RWPE1 (cell line): ENCODE measurements at regions of chr9 and their contacts with region 1.

Region 1: DNA sequence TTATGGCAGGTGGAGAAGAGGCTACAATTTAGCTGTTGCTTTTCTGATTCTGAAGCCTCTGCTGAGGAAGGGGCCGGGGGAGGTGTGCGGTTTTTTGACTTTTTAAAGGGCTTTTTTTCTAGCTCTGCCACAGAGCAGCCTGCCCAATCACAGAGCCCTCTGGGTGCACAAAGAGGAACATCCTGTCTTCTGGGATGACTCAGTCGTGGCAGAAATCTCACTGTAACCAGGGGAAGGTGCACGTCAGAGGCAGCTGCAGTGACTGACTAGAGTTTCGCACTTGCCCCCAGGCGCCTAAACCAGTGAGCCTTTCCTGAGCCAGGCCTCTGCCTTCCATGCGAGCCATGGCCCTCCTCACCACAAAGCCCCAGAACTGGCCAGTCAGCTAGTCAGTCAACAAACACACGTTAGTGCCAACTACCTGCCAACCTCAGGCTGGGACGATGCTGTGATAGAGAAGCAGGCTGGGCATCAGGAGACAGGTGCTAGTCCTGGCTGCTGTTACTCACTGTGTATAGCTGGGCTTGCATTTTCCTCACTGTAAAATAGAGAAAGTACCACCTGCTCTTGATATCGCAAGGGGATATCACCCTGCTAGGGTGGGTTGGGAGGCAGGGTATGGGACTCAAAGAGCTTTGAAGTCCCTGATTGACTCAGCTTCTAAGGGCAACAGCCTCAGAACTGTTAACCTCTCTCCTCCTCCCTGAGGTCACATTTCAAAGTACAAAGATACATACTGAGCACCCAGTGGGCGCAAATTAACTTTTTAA is 2.2 kb downstream of the AKNA start:
- DNase-seq: peak; percentile 95
- H3K27ac ChIP-seq: peak overlapping the region; percentile 82
- CTCF ChIP-seq: no peak

Region 2: DNA sequence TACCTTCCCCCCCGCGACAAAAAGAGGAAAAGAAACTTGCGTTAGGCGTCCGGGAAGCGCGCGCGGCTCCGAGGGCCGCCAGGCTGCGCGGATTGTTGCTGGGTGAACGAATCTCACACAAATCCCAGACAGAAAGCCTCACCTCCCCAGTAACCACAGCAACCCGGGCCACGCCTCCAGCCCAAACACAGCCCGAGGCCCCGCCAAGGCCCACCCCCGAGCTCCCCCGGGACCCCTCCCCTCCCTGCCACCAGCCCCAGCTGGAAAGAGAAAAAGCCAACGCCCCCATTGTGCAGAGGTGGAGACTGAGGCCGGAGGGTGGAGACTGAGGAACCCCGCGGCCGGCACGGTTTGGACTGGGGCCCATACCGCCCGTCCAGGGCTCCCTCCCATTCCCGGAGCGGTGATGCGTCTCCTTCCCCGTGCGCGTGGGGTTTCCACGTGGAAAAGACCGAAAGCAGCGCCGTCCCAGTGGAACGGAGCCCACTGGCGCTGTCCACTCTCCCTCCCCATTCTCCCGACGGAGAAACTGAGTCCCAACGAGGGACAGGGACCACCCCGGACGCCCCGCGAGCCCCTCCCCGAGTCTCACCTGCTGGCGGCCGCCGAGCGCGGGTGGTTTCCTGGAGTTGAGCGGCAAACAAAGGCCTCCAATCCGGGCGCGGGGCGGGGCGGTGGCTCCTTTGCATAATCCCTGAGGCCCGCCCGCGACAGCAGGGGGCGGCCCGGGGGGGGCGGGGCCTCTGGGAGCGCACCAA is 12.4 kb after region 1 on chr9:
- CTCF ChIA-PET with region 1: no interaction called
- POLR2A ChIA-PET with region 1: interaction called, 10 read pairs
- DNase-seq: peak; percentile 100
- H3K27ac ChIP-seq: peak overlapping the region; percentile 47
- CTCF ChIP-seq: no peak